ENCODE measurements at regions of chr18 and their contacts with region 1.

Region 1: DNA sequence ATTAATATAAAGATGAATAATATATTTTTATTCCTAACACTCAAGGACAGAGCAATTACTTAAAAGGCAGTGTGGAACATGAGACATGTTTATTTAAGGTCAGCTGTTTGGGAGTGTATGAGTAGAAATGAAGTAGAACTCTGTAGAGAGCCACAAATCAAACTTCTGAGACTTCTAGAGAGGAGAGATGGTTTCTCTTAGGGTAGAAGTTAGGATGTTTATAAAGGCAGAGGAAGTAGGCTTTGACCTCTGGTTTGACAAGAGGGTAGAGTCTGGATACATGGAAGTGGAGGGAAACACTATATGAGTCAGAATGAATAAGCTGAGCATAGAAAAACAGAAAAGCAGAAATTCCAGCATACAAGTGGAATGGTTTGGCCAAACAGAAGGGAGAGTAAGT is 262.1 kb upstream of the KLHL14 start:
- DNase-seq: no peak
- H3K4me3 ChIP-seq: no peak overlapping the region
- H3K27ac ChIP-seq: no peak overlapping the region
- H3K4me1 ChIP-seq: no peaks in the 10 kb centered on the region
- CTCF ChIP-seq: no peak

Region 2: GRCh38 chr18:33097126-33097525 is 62.2 kb after region 1 on chr18:
- CTCF ChIA-PET with region 1: no interaction called
- POLR2A ChIA-PET with region 1: no interaction called
- intact Hi-C with region 1: loop called (anchors 10 kb)
- DNase-seq: no peak
- H3K4me3 ChIP-seq: no peak overlapping the region
- H3K27ac ChIP-seq: no peak overlapping the region
- H3K4me1 ChIP-seq: no peaks in the 10 kb centered on the region
- CTCF ChIP-seq: no peak

Region 3: DNA sequence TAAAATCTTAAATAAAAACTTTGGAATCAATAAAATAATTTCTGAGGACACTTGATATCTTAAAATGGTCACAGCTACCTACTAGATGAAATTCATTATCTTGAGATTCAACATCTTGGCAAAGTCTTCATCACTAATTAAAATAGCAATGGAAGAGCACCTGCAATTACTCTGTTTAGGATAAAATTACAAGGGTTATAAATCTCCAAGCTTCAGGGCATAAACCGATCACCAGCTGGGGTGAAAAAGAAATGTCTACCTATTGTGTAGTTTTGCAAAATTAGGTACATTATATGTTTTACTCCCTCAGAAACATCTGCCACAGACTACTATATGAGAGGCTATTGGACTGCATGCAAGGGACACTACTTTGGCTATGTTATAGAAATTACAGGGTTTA is 78.5 kb after region 1 on chr18:
- CTCF ChIA-PET with region 1: no interaction called
- POLR2A ChIA-PET with region 1: no interaction called
- intact Hi-C with region 1: no loop called
- DNase-seq: no peak
- H3K4me3 ChIP-seq: no peak overlapping the region
- H3K27ac ChIP-seq: no peak overlapping the region
- H3K4me1 ChIP-seq: no peaks in the 10 kb centered on the region
- CTCF ChIP-seq: no peak

Measured in OCI-LY7 (cell line).